ENCODE measurements at regions of chr2 and their contacts with region 1.

Region 1: GRCh38 chr2:47782671-47783485 is at the start of gene MSH6:
- DNase-seq: peak; percentile 93
- H3K4me3 ChIP-seq: peak within 1 kb of the TSS; percentile 84 to 99 (median 90)
- H3K27ac ChIP-seq: peak within 1 kb of the TSS; percentile 95 to 98 (median 97)
- H3K4me1 ChIP-seq: peaks cover 0 to 31% (median 17%) of the 10 kb centered on the region in 4 donors
- H3K27me3 ChIP-seq: no peaks in the 10 kb centered on the region
- CTCF ChIP-seq: no peak
- EP300 ChIP-seq: no peak
- POLR2A ChIP-seq: peak; percentile 70 to 77
- total RNA-seq, gene MSH6: 29.5 to 48.2 (median 37.9) TPM

Region 2: GRCh38 chr2:47906157-47907038 is 123.5 kb after region 1 on chr2 and contains the start of gene FBXO11:
- intact Hi-C with region 1: loop called (anchors 1 kb)
- DNase-seq: peak; percentile 98
- H3K4me3 ChIP-seq: peak within 1 kb of the TSS; percentile 73 to 97 (median 86)
- H3K27ac ChIP-seq: peak within 1 kb of the TSS; percentile 98 to 100 (median 100)
- H3K4me1 ChIP-seq: peaks cover 0 to 31% (median 26%) of the 10 kb centered on the region in 4 donors
- H3K27me3 ChIP-seq: no peaks in the 10 kb centered on the region
- CTCF ChIP-seq: peak; percentile 42 to 56 (median 50)
- EP300 ChIP-seq: no peak
- POLR2A ChIP-seq: peak; percentile 69 to 78
- total RNA-seq, gene FBXO11: 43.8 to 71.7 (median 49.6) TPM

Region 3: GRCh38 chr2:48107326-48107925 is 324.5 kb after region 1 on chr2:
- intact Hi-C with region 1: loop called (anchors 5 kb)
- DNase-seq: no peak
- H3K4me3 ChIP-seq: no peak overlapping the region
- H3K27ac ChIP-seq: peak overlapping the region in 3 of 4 donors; percentile 69 to 71 (median 69)
- H3K4me1 ChIP-seq: peaks cover 0 to 27% (median 17%) of the 10 kb centered on the region in 4 donors
- H3K27me3 ChIP-seq: no peaks in the 10 kb centered on the region
- CTCF ChIP-seq: no peak
- EP300 ChIP-seq: no peak
- POLR2A ChIP-seq: no peak

Region 4: DNA sequence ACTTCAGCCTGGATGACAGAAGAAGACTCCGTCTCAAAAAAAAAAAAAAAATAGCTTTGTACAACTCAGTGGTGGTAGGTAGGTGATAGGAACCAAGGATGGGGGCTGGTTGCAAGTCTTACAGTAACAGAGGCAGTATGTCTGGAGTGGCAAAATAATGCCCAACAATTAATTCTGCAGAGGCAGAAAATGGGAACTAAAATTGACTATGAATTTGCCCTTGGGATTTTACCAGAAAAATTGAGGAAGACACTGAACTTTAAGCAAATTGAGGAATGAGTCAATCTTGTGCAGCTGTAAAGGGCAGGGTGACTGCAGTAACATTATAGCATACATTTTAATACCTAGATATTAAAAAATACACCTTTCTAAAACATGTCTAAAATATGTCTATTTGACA is 415.5 kb after region 1 on chr2:
- intact Hi-C with region 1: no loop called
- DNase-seq: no peak
- H3K4me3 ChIP-seq: no peak overlapping the region
- H3K27ac ChIP-seq: no peak overlapping the region
- H3K4me1 ChIP-seq: no peaks in the 10 kb centered on the region
- H3K27me3 ChIP-seq: no peaks in the 10 kb centered on the region
- CTCF ChIP-seq: no peak
- EP300 ChIP-seq: no peak
- POLR2A ChIP-seq: no peak

Region 5: DNA sequence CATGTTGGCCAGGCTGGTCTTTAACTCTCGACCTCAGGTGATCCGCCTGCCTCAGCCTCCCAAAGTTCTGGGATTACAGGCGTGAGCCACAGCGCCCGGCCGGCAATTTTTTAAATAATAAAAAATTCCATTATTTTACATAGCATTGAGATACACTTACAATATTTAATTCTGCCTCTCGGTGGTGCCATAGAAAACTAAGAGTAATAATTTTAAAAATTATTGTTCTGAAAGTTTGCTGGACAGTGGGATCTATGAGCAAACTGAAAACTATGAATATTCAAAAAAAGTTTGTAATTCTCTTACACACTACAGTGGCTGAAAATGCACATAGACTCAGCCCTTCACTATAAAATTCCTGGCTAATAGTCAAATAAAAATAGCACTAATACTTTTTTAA is 656.2 kb after region 1 on chr2:
- intact Hi-C with region 1: loop called (anchors 5 kb)
- DNase-seq: no peak
- H3K4me3 ChIP-seq: no peak overlapping the region
- H3K27ac ChIP-seq: no peak overlapping the region
- H3K4me1 ChIP-seq: peaks cover 0 to 21% (median 19%) of the 10 kb centered on the region in 4 donors
- H3K27me3 ChIP-seq: no peaks in the 10 kb centered on the region
- CTCF ChIP-seq: no peak
- EP300 ChIP-seq: no peak
- POLR2A ChIP-seq: no peak